Heart right ventricle (tissue), 16 donors: ENCODE measurements at regions of chr15 and their contacts with region 1.

Region 1: GRCh38 chr15:82999905-83000671 is 11.4 kb downstream of the C15orf40 start:
- DNase-seq: no peak
- ATAC-seq: peak; percentile 61 to 86 (median 80)
- H3K4me3 ChIP-seq: peak overlapping the region in 7 of 10 donors; percentile 5 to 45 (median 31)
- H3K27ac ChIP-seq: peak overlapping the region in 3 of 10 donors; percentile 10 to 24 (median 16)
- H3K4me1 ChIP-seq: peaks cover 0 to 10% (median 6%) of the 10 kb centered on the region in 9 donors
- H3K27me3 ChIP-seq: no peaks in the 10 kb centered on the region
- CTCF ChIP-seq: peak in 7 of 9 donors; percentile 46 to 69 (median 52)

Region 2: DNA sequence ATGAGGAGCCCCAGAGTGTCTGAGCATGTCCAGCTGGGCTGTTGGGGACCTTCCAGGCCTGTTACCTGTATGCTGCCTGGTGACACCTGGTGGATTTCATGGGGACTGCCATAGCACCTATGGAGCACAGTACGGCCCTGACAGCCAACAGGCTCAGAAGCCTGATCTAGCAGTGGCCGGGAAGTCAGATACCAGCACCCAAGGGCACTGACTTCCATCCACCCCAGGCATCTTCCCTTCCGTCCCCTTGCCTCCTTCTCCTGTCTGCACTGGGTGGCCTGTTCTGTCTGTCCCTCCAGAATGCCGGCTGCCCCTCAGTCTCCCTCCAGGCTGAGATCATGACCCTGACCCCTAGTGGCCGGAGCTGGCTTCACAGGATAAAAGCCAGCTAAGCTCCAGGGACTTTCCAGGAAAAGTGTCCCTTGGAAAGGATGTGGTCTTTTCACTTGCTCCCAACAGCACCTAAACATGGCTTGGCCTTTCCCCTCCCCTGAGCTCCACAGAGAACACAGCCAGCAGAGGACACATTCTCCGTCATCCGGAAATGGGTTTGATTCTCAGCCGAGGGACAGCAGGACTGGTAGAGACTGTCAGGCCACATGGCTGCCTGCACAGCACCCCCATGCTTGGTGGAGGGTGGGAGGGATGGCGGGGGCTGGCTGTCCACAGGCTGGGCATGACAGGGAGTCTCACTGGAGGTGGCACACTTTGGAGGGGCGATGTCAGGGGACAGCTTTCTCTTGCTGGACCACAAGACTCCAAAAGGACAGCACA is 469.3 kb before region 1 on chr15:
- intact Hi-C with region 1: loop called in 2 of 10 experiments (anchors 10 kb)
- DNase-seq: peak; percentile 58 to 62
- ATAC-seq: peak; percentile 74 to 92 (median 88)
- H3K4me3 ChIP-seq: peak overlapping the region in 4 of 10 donors; percentile 10 to 37 (median 23)
- H3K27ac ChIP-seq: peak overlapping the region in 2 of 10 donors; percentile 40 to 54
- H3K4me1 ChIP-seq: peaks cover 0 to 14% (median 8%) of the 10 kb centered on the region in 9 donors
- H3K27me3 ChIP-seq: no peaks in the 10 kb centered on the region
- CTCF ChIP-seq: peak; percentile 58 to 85 (median 81)

Region 3: DNA sequence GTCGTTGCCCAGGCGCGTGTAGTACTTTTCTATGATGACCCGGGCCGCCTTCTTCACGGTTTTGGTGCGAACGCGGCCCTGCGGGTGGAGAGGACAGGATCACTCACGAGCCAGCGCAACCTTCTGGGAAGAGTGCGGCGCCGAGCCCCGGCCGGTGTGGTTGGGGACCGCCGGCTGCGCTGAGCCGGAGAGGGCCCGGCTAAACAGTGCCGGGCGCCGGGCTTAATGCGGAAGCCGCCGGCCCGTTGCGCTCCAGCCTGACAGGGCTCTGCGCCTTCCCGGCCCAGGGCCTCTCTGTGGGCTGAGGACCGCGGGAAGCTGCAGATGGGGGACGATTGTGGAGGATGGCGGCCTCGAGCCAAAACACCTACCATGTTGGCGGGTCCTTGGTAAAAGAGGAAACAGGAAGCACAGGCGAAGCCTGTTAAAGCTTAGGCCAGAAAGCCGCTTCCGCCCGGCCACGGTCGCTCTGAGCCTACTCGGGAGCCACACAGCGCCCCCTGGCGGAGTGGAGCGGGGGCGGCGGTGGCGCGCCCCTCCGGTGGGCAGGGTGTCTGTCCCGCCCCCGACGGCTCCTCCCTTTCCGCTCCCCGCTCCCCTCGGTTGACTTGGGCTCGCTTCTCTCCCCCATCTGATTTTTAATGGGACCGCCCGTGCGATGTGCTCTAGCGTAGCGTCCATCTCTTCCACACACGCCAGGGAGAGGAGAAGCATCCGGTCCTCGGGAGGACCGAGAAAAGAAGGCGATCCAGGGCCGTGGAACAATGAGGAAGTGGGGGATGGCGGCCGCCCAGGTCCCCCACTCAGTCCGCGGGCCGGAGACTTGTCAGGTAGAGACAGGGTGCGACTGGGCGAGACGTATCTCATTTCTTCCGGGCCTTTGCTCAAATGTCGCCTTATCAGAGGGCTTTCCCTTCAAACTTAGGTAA is 459.8 kb before region 1 on chr15 and contains the start of gene RPS17:
- intact Hi-C with region 1: loop called in 3 of 10 experiments (anchors 5 to 10 kb)
- DNase-seq: peak; percentile 96 to 98
- ATAC-seq: peak; percentile 97 to 99 (median 98)
- H3K4me3 ChIP-seq: peak within 1 kb of the TSS; percentile 65 to 98 (median 88)
- H3K27ac ChIP-seq: peak within 1 kb of the TSS; percentile 51 to 96 (median 90)
- H3K4me1 ChIP-seq: peaks cover 2 to 47% (median 41%) of the 10 kb centered on the region in 9 donors
- H3K27me3 ChIP-seq: peaks cover 0 to 4% (median 0%) of the 10 kb centered on the region in 7 donors
- CTCF ChIP-seq: peak; percentile 98 to 100 (median 100)
- total RNA-seq, gene RPS17: 675 to 1,048 (median 736) TPM

Region 4: GRCh38 chr15:82849556-82850512 is 150.3 kb before region 1 on chr15:
- intact Hi-C with region 1: loop called in 9 of 10 experiments (anchors 1 to 5 kb)
- DNase-seq: peak; percentile 74 to 82
- ATAC-seq: peak; percentile 88 to 96 (median 92)
- H3K4me3 ChIP-seq: peak overlapping the region in 5 of 10 donors; percentile 9 to 36 (median 19)
- H3K27ac ChIP-seq: peak overlapping the region in 5 of 10 donors; percentile 16 to 62 (median 33)
- H3K4me1 ChIP-seq: peaks cover 0 to 16% (median 13%) of the 10 kb centered on the region in 9 donors
- H3K27me3 ChIP-seq: no peaks in the 10 kb centered on the region
- CTCF ChIP-seq: peak; percentile 50 to 90 (median 76)

Region 5: GRCh38 chr15:82900511-82901060 is 99.5 kb before region 1 on chr15:
- intact Hi-C with region 1: no loop called
- DNase-seq: no peak
- ATAC-seq: no peak
- H3K4me3 ChIP-seq: no peak overlapping the region
- H3K27ac ChIP-seq: no peak overlapping the region
- H3K4me1 ChIP-seq: peaks cover 0 to 17% (median 0%) of the 10 kb centered on the region in 9 donors
- H3K27me3 ChIP-seq: no peaks in the 10 kb centered on the region
- CTCF ChIP-seq: no peak

Region 6: GRCh38 chr15:83066734-83067637 is 66.9 kb after region 1 on chr15 and contains the start of gene BTBD1:
- intact Hi-C with region 1: no loop called
- DNase-seq: peak; percentile 93 to 95
- ATAC-seq: peak; percentile 98 to 99 (median 98)
- H3K4me3 ChIP-seq: peak within 1 kb of the TSS; percentile 72 to 99 (median 90)
- H3K27ac ChIP-seq: peak within 1 kb of the TSS; percentile 94 to 100 (median 96)
- H3K4me1 ChIP-seq: peaks cover 5 to 50% (median 42%) of the 10 kb centered on the region in 9 donors
- H3K27me3 ChIP-seq: no peaks in the 10 kb centered on the region
- CTCF ChIP-seq: peak in 3 of 9 donors; percentile 25 to 38 (median 29)
- total RNA-seq, gene BTBD1: 130 to 185 (median 157) TPM

Region 7: DNA sequence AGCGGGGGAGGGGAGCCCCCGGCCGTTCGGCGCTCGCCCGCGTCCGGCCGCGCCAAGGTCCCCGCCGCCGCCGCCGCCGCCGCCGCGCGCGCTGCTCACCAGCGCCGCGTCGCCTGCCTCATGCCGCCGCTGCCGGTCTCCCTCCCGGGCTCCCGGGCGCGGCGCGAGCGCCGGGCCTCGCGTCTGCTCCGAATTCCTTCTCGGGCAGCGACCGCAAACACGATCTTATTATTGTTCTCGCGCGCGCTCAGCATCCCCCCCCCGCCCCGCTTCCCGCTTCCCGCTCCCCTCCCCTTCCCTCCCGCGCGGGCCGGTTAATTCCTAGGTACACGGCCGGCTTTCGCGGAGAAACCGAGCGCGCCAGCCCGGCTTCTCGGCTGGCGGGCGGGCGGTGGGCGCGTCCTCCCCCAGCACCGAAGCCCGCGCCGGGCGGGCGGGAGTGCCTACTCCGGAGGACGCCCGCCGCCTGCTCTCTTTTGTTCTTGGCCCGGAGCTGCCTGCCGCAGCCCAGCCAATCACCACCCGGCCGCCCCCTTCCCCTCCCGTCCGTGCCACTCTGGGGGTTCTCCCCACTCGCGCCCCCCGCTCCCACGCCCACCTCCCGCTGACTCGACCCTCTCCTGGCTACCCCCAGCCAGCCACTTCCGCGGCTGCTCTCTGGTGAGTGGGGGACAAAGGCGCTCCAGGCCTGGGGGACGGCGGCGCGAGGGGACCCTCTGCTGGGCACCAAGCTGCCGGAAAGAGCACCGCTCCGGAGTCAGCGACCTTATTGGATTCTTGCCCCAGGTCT is 207.7 kb after region 1 on chr15 and contains the start of gene HDGFL3:
- intact Hi-C with region 1: loop called in 1 of 10 experiments (anchors 10 kb)
- DNase-seq: peak; percentile 62 to 79
- ATAC-seq: peak; percentile 46 to 73 (median 58)
- H3K4me3 ChIP-seq: peak within 1 kb of the TSS; percentile 68 to 96 (median 92)
- H3K27ac ChIP-seq: peak within 1 kb of the TSS; percentile 80 to 96 (median 92)
- H3K4me1 ChIP-seq: peaks cover 2 to 44% (median 17%) of the 10 kb centered on the region in 9 donors
- H3K27me3 ChIP-seq: peaks cover 0 to 36% (median 0%) of the 10 kb centered on the region in 7 donors
- CTCF ChIP-seq: peak in 2 of 9 donors; percentile 8 to 35
- total RNA-seq, gene HDGFL3: 25.5 to 43.2 (median 39.0) TPM